ENCODE measurements at regions of chr6 and their contacts with region 1.

Region 1: GRCh38 chr6:11496152-11497060 is 41.1 kb upstream of the TMEM170B start:
- DNase-seq: peak; percentile 84
- ATAC-seq: peak; percentile 77
- H3K4me3 ChIP-seq: no peak overlapping the region
- H3K27ac ChIP-seq: peak overlapping the region; percentile 68
- H3K4me1 ChIP-seq: peaks cover 56% of the 10 kb centered on the region
- H3K27me3 ChIP-seq: no peaks in the 10 kb centered on the region
- CTCF ChIP-seq: peak; percentile 76 to 96 (median 88)
- EP300 ChIP-seq: no peak
- POLR2A ChIP-seq: no peak
- RAD21 ChIP-seq: peak; percentile 99

Region 2: DNA sequence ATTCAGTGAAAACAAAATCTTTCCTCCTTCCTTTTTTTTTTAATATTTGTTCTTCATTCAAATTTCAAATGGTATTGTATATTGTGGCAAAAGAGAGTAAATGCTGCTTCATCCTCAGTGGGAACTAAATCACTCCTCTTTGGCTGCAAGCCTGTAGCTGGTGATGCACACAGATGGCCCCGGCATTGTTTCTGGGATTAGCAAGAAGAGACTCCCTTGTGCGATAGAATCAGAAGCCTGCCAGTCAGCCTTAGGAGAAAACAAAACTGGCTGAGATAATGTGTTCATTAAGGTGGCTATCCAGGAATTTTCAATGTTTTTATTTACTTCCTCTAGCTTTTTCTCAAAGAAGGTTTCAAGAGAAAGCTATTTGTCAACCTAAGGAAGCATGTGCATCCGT is 431.6 kb before region 1 on chr6:
- CTCF ChIA-PET with region 1: interaction called, 16 read pairs
- POLR2A ChIA-PET with region 1: no interaction called
- RAD21 ChIA-PET with region 1: interaction called, 25 read pairs
- SMC1A ChIA-PET with region 1: interaction called, 11 read pairs
- in situ Hi-C with region 1: no loop called
- intact Hi-C with region 1: loop called (anchors 1 kb)
- DNase-seq: no peak
- ATAC-seq: no peak
- H3K4me3 ChIP-seq: no peak overlapping the region
- H3K27ac ChIP-seq: no peak overlapping the region
- H3K4me1 ChIP-seq: no peaks in the 10 kb centered on the region
- H3K27me3 ChIP-seq: no peaks in the 10 kb centered on the region
- CTCF ChIP-seq: no peak
- EP300 ChIP-seq: no peak
- POLR2A ChIP-seq: no peak
- RAD21 ChIP-seq: no peak

Region 3: GRCh38 chr6:11161031-11161966 is 335.1 kb before region 1 on chr6:
- CTCF ChIA-PET with region 1: interaction called, 18 read pairs
- POLR2A ChIA-PET with region 1: no interaction called
- RAD21 ChIA-PET with region 1: interaction called, 18 read pairs
- SMC1A ChIA-PET with region 1: interaction called, 208 read pairs
- in situ Hi-C with region 1: no loop called
- intact Hi-C with region 1: no loop called
- DNase-seq: no peak
- ATAC-seq: no peak
- H3K4me3 ChIP-seq: no peak overlapping the region
- H3K27ac ChIP-seq: no peak overlapping the region
- H3K4me1 ChIP-seq: peaks cover 6% of the 10 kb centered on the region; the same call in 1 of the 2 replicates
- H3K27me3 ChIP-seq: no peaks in the 10 kb centered on the region
- CTCF ChIP-seq: no peak
- EP300 ChIP-seq: no peak
- POLR2A ChIP-seq: no peak
- RAD21 ChIP-seq: no peak

Region 4: GRCh38 chr6:11288047-11288461 is 208.4 kb before region 1 on chr6:
- CTCF ChIA-PET with region 1: interaction called, 4 read pairs
- POLR2A ChIA-PET with region 1: no interaction called
- RAD21 ChIA-PET with region 1: interaction called, 10 read pairs
- SMC1A ChIA-PET with region 1: interaction called, 13 read pairs
- in situ Hi-C with region 1: no loop called
- intact Hi-C with region 1: no loop called
- DNase-seq: no peak
- ATAC-seq: no peak
- H3K4me3 ChIP-seq: no peak overlapping the region
- H3K27ac ChIP-seq: no peak overlapping the region
- H3K4me1 ChIP-seq: no peaks in the 10 kb centered on the region; the same call in 1 of the 2 replicates
- H3K27me3 ChIP-seq: no peaks in the 10 kb centered on the region
- CTCF ChIP-seq: no peak
- EP300 ChIP-seq: no peak
- POLR2A ChIP-seq: no peak
- RAD21 ChIP-seq: no peak

Region 5: GRCh38 chr6:11381801-11382513 is 114.4 kb before region 1 on chr6:
- CTCF ChIA-PET with region 1: interaction called, 71 read pairs
- POLR2A ChIA-PET with region 1: interaction called, 82 read pairs
- RAD21 ChIA-PET with region 1: interaction called, 263 read pairs
- SMC1A ChIA-PET with region 1: interaction called, 250 read pairs
- in situ Hi-C with region 1: no loop called
- intact Hi-C with region 1: loop called (anchors 1 kb)
- DNase-seq: peak; percentile 92
- ATAC-seq: peak; percentile 77
- H3K4me3 ChIP-seq: peak overlapping the region; percentile 72
- H3K27ac ChIP-seq: peak overlapping the region; percentile 90
- H3K4me1 ChIP-seq: peaks cover 24% of the 10 kb centered on the region
- H3K27me3 ChIP-seq: no peaks in the 10 kb centered on the region
- CTCF ChIP-seq: no peak
- EP300 ChIP-seq: no peak; a peak in 1 of 4 replicates
- POLR2A ChIP-seq: peak; percentile 92
- RAD21 ChIP-seq: 0 out of 2 replicates have a peak, but pooled peaks have one; percentile 5

Region 6: GRCh38 chr6:11467364-11467763 is 29.0 kb before region 1 on chr6:
- CTCF ChIA-PET with region 1: interaction called, 106 read pairs
- POLR2A ChIA-PET with region 1: interaction called, 9 read pairs
- RAD21 ChIA-PET with region 1: interaction called, 348 read pairs
- SMC1A ChIA-PET with region 1: interaction called, 78 read pairs
- in situ Hi-C with region 1: no loop called
- intact Hi-C with region 1: loop called (anchors 1 kb)
- DNase-seq: peak; percentile 88
- ATAC-seq: peak; percentile 82
- H3K4me3 ChIP-seq: no peak overlapping the region
- H3K27ac ChIP-seq: peak overlapping the region; percentile 91
- H3K4me1 ChIP-seq: peaks cover 30% of the 10 kb centered on the region
- H3K27me3 ChIP-seq: no peaks in the 10 kb centered on the region
- CTCF ChIP-seq: no peak
- EP300 ChIP-seq: no peak
- POLR2A ChIP-seq: no peak
- RAD21 ChIP-seq: peak; percentile 25

Region 7: DNA sequence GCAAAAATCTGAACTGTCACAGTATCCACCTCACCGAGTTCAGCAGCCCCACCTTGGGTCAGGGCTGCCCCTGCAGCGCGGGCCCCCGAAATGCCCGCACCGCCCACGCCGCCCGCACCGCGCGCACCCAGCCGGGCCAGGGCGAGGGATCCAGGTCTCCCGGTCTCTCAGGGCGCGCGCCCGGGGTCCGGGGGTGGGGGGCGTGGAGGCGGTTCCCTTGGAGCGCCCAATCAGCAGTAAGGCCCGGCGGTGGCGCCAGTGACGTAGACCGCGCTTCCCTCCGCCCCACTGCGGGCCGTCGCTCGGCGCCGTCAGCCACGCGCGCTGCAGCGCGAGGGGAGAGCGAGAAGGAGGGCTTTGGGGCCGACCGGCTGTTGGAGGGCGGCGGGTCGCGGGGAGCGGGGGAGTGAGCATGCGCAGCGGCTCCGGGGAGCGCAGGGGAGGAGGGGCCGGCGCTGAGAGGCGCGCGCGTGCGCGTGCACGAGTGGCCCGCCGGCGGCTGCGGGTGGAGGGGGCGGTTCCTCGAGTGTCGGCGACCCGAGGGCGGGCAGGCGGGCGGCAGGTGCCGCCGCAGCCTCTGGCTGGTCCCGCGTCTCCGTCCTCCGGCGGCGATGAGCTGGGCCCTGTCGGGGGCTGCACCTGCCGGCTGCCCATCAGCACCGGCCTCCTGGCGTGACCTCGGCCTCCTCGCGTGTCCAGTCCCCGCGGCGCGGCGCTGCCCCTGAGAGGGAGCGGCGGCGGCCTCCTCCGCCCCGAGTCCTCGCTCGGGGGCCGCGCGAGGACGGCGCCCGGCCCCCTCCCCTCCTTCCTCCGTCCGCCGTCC is 41.0 kb after region 1 on chr6 and contains the start of gene TMEM170B:
- CTCF ChIA-PET with region 1: interaction called, 25 read pairs
- POLR2A ChIA-PET with region 1: interaction called, 3 read pairs
- RAD21 ChIA-PET with region 1: interaction called, 16 read pairs
- SMC1A ChIA-PET with region 1: interaction called, 21 read pairs
- in situ Hi-C with region 1: no loop called
- intact Hi-C with region 1: no loop called
- DNase-seq: peak; percentile 82
- ATAC-seq: peak; percentile 98
- H3K4me3 ChIP-seq: peak within 1 kb of the TSS; percentile 96
- H3K27ac ChIP-seq: peak within 1 kb of the TSS; percentile 69
- H3K4me1 ChIP-seq: no peaks in the 10 kb centered on the region; the same call in 1 of the 2 replicates
- H3K27me3 ChIP-seq: no peaks in the 10 kb centered on the region
- CTCF ChIP-seq: no peak
- EP300 ChIP-seq: 0 out of 4 replicates have a peak, but pooled peaks of 1 of the 2 experiments have one; percentile 5
- POLR2A ChIP-seq: peak; percentile 78
- RAD21 ChIP-seq: no peak
- polyA plus RNA-seq, gene TMEM170B: 1.6 to 1.8 TPM

Region 8: GRCh38 chr6:11645016-11645415 is 148.6 kb after region 1 on chr6:
- CTCF ChIA-PET with region 1: no interaction called
- POLR2A ChIA-PET with region 1: no interaction called
- RAD21 ChIA-PET with region 1: no interaction called
- SMC1A ChIA-PET with region 1: no interaction called
- in situ Hi-C with region 1: no loop called
- intact Hi-C with region 1: no loop called
- DNase-seq: no peak
- ATAC-seq: no peak
- H3K4me3 ChIP-seq: no peak overlapping the region
- H3K27ac ChIP-seq: no peak overlapping the region
- H3K4me1 ChIP-seq: no peaks in the 10 kb centered on the region
- H3K27me3 ChIP-seq: no peaks in the 10 kb centered on the region
- CTCF ChIP-seq: no peak
- EP300 ChIP-seq: no peak
- POLR2A ChIP-seq: no peak
- RAD21 ChIP-seq: no peak